ENCODE measurements at regions of chr2 and their contacts with region 1.

Region 1: GRCh38 chr2:223930103-223930976 is 14.8 kb downstream of the WDFY1 start:
- DNase-seq: peak; percentile 94 to 97
- H3K4me3 ChIP-seq: peak overlapping the region; percentile 24
- H3K4me3 Mint-ChIP-seq: peak overlapping the region; percentile 85
- H3K27ac Mint-ChIP-seq: peak overlapping the region; percentile 99
- H3K4me1 ChIP-seq: peaks cover 58% of the 10 kb centered on the region
- H3K4me1 Mint-ChIP-seq: peaks cover 39% of the 10 kb centered on the region
- H3K27me3 ChIP-seq: no peaks in the 10 kb centered on the region
- H3K27me3 Mint-ChIP-seq: no peaks in the 10 kb centered on the region
- CTCF ChIP-seq: no peak

Region 2: DNA sequence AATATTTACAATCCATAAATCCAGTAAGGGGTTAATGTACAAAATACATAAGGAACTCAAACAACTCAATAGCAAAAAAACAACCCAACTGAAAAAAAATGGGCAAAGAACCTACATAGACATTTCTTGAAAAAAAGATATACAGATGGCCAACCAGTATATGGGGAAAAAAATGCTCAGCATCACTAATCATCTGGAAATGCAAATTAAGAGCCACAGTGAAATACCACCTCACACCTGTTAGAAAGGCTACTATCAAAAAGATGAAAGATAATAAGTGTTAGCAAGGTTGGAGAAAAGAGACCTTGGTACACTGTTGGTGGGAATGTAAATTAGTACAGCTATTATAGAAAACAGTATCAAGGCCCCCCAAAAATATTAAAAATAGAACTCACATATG is 107.5 kb before region 1 on chr2:
- CTCF ChIA-PET with region 1: no interaction called
- POLR2A ChIA-PET with region 1: interaction called, 11 read pairs
- intact Hi-C with region 1: no loop called
- DNase-seq: no peak
- H3K4me3 ChIP-seq: no peak overlapping the region
- H3K4me3 Mint-ChIP-seq: no peak overlapping the region
- H3K27ac Mint-ChIP-seq: no peak overlapping the region
- H3K4me1 ChIP-seq: peaks cover 41% of the 10 kb centered on the region
- H3K4me1 Mint-ChIP-seq: peaks cover 26% of the 10 kb centered on the region
- H3K27me3 ChIP-seq: no peaks in the 10 kb centered on the region
- H3K27me3 Mint-ChIP-seq: no peaks in the 10 kb centered on the region
- CTCF ChIP-seq: no peak

Region 3: DNA sequence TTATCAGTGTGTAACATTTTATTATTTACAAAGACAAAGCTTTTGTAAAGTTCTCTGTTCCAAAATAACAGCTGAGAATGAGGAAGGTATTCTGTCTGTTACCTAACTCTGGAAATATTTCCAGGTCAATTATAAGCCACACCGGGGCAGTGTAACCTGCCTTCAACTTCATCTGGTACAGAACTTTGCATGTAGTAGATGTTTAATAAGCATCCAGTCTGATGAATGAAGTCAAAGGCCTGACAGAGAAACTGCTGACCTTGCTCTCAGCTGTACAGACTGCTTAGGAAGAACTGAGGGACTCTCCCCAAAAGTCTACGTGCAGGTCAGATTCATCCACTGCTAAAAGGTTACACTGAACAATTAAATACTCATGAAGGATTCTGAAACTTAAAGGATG is 28.5 kb before region 1 on chr2:
- CTCF ChIA-PET with region 1: interaction called, 9 read pairs
- POLR2A ChIA-PET with region 1: no interaction called
- intact Hi-C with region 1: loop called (anchors 1 kb)
- DNase-seq: peak in 1 of 2 experiments; percentile 38
- H3K4me3 ChIP-seq: no peak overlapping the region
- H3K4me3 Mint-ChIP-seq: no peak overlapping the region
- H3K27ac Mint-ChIP-seq: no peak overlapping the region
- H3K4me1 ChIP-seq: no peaks in the 10 kb centered on the region
- H3K4me1 Mint-ChIP-seq: peaks cover 10% of the 10 kb centered on the region
- H3K27me3 ChIP-seq: no peaks in the 10 kb centered on the region
- H3K27me3 Mint-ChIP-seq: no peaks in the 10 kb centered on the region
- CTCF ChIP-seq: peak; percentile 12 to 46

Region 4: GRCh38 chr2:223944703-223945531 is 14.6 kb after region 1 on chr2 and contains the start of gene WDFY1:
- CTCF ChIA-PET with region 1: interaction called, 7 read pairs
- POLR2A ChIA-PET with region 1: interaction called, 11 read pairs
- intact Hi-C with region 1: loop called (anchors 1 kb)
- DNase-seq: peak; percentile 90 to 96
- H3K4me3 ChIP-seq: peak within 1 kb of the TSS; percentile 96
- H3K4me3 Mint-ChIP-seq: peak within 1 kb of the TSS; percentile 97
- H3K27ac Mint-ChIP-seq: peak within 1 kb of the TSS; percentile 94
- H3K4me1 ChIP-seq: peaks cover 18% of the 10 kb centered on the region
- H3K4me1 Mint-ChIP-seq: peaks cover 39% of the 10 kb centered on the region
- H3K27me3 ChIP-seq: no peaks in the 10 kb centered on the region
- H3K27me3 Mint-ChIP-seq: no peaks in the 10 kb centered on the region
- CTCF ChIP-seq: no peak
- total RNA-seq, gene WDFY1: 110 and 123 TPM in 2 replicates

Region 5: GRCh38 chr2:224058048-224058775 is 127.9 kb after region 1 on chr2:
- CTCF ChIA-PET with region 1: no interaction called
- POLR2A ChIA-PET with region 1: no interaction called
- intact Hi-C with region 1: no loop called
- DNase-seq: no peak
- H3K4me3 ChIP-seq: no peak overlapping the region
- H3K4me3 Mint-ChIP-seq: no peak overlapping the region
- H3K27ac Mint-ChIP-seq: no peak overlapping the region
- H3K4me1 ChIP-seq: no peaks in the 10 kb centered on the region
- H3K4me1 Mint-ChIP-seq: no peaks in the 10 kb centered on the region
- H3K27me3 ChIP-seq: no peaks in the 10 kb centered on the region
- H3K27me3 Mint-ChIP-seq: peaks cover 13% of the 10 kb centered on the region
- CTCF ChIP-seq: peak in 1 of 2 experiments; percentile 29

Measured in Caco-2 (cell line).